ENCODE measurements at regions of chr3 and their contacts with region 1.

Region 1: GRCh38 chr3:112814266-112814665 is 32.4 kb downstream of the CD200R1L start:
- DNase-seq: no peak
- ATAC-seq: peak in 3 of 8 donors; percentile 32 to 45 (median 44)
- H3K4me3 ChIP-seq: no peak overlapping the region
- H3K27ac ChIP-seq: peak overlapping the region in 5 of 10 donors; percentile 30 to 82 (median 78)
- H3K4me1 ChIP-seq: peaks cover 0 to 65% (median 16%) of the 10 kb centered on the region in 9 donors
- H3K27me3 ChIP-seq: peaks cover 0 to 6% (median 0%) of the 10 kb centered on the region in 7 donors
- CTCF ChIP-seq: peak in 7 of 9 donors; percentile 30 to 62 (median 49)

Region 2: GRCh38 chr3:112405845-112406244 is 408.4 kb before region 1 on chr3:
- intact Hi-C with region 1: no loop called
- DNase-seq: no peak
- ATAC-seq: no peak
- H3K4me3 ChIP-seq: no peak overlapping the region
- H3K27ac ChIP-seq: no peak overlapping the region
- H3K4me1 ChIP-seq: no peaks in the 10 kb centered on the region
- H3K27me3 ChIP-seq: no peaks in the 10 kb centered on the region
- CTCF ChIP-seq: no peak

Region 3: GRCh38 chr3:112582244-112582874 is 231.9 kb before region 1 on chr3:
- intact Hi-C with region 1: loop called in 4 of 10 experiments (anchors 2 to 10 kb)
- DNase-seq: peak in 1 of 2 donors; percentile 19
- ATAC-seq: no peak
- H3K4me3 ChIP-seq: no peak overlapping the region
- H3K27ac ChIP-seq: no peak overlapping the region
- H3K4me1 ChIP-seq: peaks cover 0 to 16% (median 0%) of the 10 kb centered on the region in 9 donors
- H3K27me3 ChIP-seq: no peaks in the 10 kb centered on the region
- CTCF ChIP-seq: peak; percentile 25 to 76 (median 66)

Region 4: DNA sequence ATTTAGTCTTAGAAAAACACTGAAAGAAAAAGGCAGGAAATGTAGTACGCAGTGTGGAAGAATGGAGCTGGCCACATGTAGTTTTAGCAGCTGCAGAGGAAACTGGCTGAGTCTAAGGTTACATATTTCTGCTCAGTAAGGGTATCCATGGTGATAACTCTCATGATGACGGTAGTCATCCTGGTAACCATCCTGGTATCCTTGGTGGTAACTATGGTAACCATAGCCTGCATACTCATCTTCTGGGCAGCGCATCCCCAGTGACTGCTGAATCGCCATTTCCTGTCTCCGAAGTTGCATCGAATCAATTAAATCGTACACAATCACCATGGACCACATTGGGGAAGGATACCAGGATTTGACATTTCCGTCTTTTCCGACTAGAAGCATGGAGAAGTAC is 209.0 kb before region 1 on chr3:
- intact Hi-C with region 1: loop called in 1 of 10 experiments (anchors 10 kb)
- DNase-seq: peak in 1 of 2 donors; percentile 8
- ATAC-seq: peak in 6 of 8 donors; percentile 42 to 93 (median 66)
- H3K4me3 ChIP-seq: no peak overlapping the region
- H3K27ac ChIP-seq: peak overlapping the region in 4 of 10 donors; percentile 31 to 58 (median 39)
- H3K4me1 ChIP-seq: peaks cover 0 to 19% (median 11%) of the 10 kb centered on the region in 9 donors
- H3K27me3 ChIP-seq: no peaks in the 10 kb centered on the region
- CTCF ChIP-seq: no peak

Region 5: DNA sequence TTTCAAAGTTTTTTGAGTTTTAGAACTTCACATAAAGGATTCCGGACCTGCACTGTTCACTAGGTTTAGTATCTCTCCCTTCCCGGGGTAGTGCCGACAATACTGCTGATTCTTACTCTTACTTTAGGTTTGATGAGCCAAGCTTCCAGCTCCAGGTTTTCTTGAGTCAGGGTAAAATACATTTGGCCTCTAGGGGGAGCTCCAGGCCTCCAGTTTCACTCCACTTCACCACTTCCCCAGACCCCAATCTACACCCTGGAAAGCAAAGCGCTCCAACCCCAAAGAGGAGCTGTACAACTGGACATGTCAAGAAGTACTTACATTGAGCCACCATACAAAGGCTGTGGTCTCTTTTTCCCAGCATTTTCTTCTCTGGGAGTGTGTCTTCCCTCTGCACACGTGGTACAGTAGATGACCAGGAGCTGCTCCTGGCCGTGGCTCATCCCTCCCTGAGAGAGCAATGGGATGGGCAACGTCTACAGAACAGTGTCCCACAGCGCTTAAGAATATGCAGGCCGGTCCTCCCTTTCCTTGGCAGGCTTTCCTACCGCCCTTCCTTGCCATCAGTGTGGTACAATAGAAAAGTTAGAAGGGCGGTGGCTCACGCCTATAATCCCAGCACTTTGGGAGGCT is 79.4 kb before region 1 on chr3:
- intact Hi-C with region 1: loop called in 5 of 10 experiments (anchors 2 to 10 kb)
- DNase-seq: peak in 1 of 2 donors; percentile 62
- ATAC-seq: peak in 6 of 8 donors; percentile 46 to 75 (median 72)
- H3K4me3 ChIP-seq: no peak overlapping the region
- H3K27ac ChIP-seq: no peak overlapping the region
- H3K4me1 ChIP-seq: peaks cover 0 to 27% (median 0%) of the 10 kb centered on the region in 9 donors
- H3K27me3 ChIP-seq: peaks cover 0 to 6% (median 0%) of the 10 kb centered on the region in 7 donors
- CTCF ChIP-seq: peak; percentile 32 to 78 (median 65)

Region 6: GRCh38 chr3:112767177-112767576 is 47.1 kb before region 1 on chr3:
- intact Hi-C with region 1: loop called in 1 of 10 experiments (anchors 5 kb)
- DNase-seq: no peak
- ATAC-seq: peak in 6 of 8 donors; percentile 43 to 77 (median 59)
- H3K4me3 ChIP-seq: no peak overlapping the region
- H3K27ac ChIP-seq: no peak overlapping the region
- H3K4me1 ChIP-seq: peaks cover 0 to 39% (median 0%) of the 10 kb centered on the region in 9 donors
- H3K27me3 ChIP-seq: no peaks in the 10 kb centered on the region
- CTCF ChIP-seq: peak in 1 of 9 donors; percentile 12

Region 7: GRCh38 chr3:112776012-112776411 is 38.3 kb before region 1 on chr3:
- intact Hi-C with region 1: loop called in 1 of 10 experiments (anchors 5 kb)
- DNase-seq: no peak
- ATAC-seq: no peak
- H3K4me3 ChIP-seq: no peak overlapping the region
- H3K27ac ChIP-seq: peak overlapping the region in 9 of 10 donors; percentile 26 to 83 (median 53)
- H3K4me1 ChIP-seq: peaks cover 0 to 71% (median 11%) of the 10 kb centered on the region in 9 donors
- H3K27me3 ChIP-seq: peaks cover 0 to 6% (median 0%) of the 10 kb centered on the region in 7 donors
- CTCF ChIP-seq: no peak